ENCODE measurements at regions of chr2 and their contacts with region 1.

Region 1: DNA sequence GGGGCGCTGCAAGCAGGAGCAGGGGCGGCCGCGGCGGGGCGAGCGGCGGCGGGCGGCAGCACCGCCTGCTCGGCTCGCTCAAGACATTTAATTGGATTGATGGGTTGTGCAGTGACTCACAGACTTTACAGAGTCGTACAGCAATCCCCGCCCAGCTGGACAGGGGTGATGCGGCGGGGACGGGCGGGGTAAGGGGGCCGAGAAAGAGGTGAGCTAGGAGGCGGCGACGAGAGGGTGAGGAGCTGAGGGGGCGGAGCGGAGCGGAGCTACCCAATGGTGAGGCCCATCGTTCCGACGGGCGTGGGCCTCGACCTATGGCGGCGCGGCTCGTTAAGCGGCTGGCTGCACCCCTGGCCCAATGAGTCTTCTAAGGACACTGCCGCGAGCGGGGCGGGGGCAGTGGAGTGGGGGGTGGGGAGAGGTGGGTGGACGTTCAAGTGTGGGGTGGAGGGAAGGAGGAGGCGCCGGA is 97.1 kb upstream of the SERTAD2 start:
- DNase-seq: peak; percentile 99
- H3K4me3 ChIP-seq: peak overlapping the region; percentile 73 to 74
- H3K27ac ChIP-seq: peak overlapping the region; percentile 96 to 98
- H3K4me1 ChIP-seq: peaks cover 6% of the 10 kb centered on the region
- H3K27me3 ChIP-seq: no peaks in the 10 kb centered on the region
- CTCF ChIP-seq: peak in 2 of 4 experiments; percentile 35 to 44
- POLR2A ChIP-seq: peak; percentile 99

Region 2: GRCh38 chr2:64644177-64645004 is 106.5 kb before region 1 on chr2:
- intact Hi-C with region 1: loop called (anchors 2 kb)
- DNase-seq: peak; percentile 53
- H3K4me3 ChIP-seq: peak overlapping the region; percentile 25 to 33
- H3K27ac ChIP-seq: peak overlapping the region; percentile 90
- H3K4me1 ChIP-seq: peaks cover 13% of the 10 kb centered on the region
- H3K27me3 ChIP-seq: no peaks in the 10 kb centered on the region
- CTCF ChIP-seq: no peak
- POLR2A ChIP-seq: peak; percentile 44

Region 3: GRCh38 chr2:64653349-64654062 is 97.3 kb before region 1 on chr2 and contains the start of gene SERTAD2:
- intact Hi-C with region 1: loop called (anchors 1 kb)
- DNase-seq: peak; percentile 87
- H3K4me3 ChIP-seq: peak within 1 kb of the TSS; percentile 94 to 96
- H3K27ac ChIP-seq: peak within 1 kb of the TSS; percentile 99
- H3K4me1 ChIP-seq: no peaks in the 10 kb centered on the region
- H3K27me3 ChIP-seq: no peaks in the 10 kb centered on the region
- CTCF ChIP-seq: peak in 1 of 4 experiments; percentile 2
- POLR2A ChIP-seq: peak; percentile 86
- total RNA-seq, gene SERTAD2: 15.3 to 26.0 TPM

Region 4: GRCh38 chr2:64730551-64731262 is 20.1 kb before region 1 on chr2:
- intact Hi-C with region 1: loop called (anchors 2 kb)
- DNase-seq: peak; percentile 71
- H3K4me3 ChIP-seq: peak overlapping the region; percentile 11 to 30
- H3K27ac ChIP-seq: peak overlapping the region; percentile 45 to 60
- H3K4me1 ChIP-seq: no peaks in the 10 kb centered on the region
- H3K27me3 ChIP-seq: no peaks in the 10 kb centered on the region
- CTCF ChIP-seq: no peak
- POLR2A ChIP-seq: no peak

Region 5: DNA sequence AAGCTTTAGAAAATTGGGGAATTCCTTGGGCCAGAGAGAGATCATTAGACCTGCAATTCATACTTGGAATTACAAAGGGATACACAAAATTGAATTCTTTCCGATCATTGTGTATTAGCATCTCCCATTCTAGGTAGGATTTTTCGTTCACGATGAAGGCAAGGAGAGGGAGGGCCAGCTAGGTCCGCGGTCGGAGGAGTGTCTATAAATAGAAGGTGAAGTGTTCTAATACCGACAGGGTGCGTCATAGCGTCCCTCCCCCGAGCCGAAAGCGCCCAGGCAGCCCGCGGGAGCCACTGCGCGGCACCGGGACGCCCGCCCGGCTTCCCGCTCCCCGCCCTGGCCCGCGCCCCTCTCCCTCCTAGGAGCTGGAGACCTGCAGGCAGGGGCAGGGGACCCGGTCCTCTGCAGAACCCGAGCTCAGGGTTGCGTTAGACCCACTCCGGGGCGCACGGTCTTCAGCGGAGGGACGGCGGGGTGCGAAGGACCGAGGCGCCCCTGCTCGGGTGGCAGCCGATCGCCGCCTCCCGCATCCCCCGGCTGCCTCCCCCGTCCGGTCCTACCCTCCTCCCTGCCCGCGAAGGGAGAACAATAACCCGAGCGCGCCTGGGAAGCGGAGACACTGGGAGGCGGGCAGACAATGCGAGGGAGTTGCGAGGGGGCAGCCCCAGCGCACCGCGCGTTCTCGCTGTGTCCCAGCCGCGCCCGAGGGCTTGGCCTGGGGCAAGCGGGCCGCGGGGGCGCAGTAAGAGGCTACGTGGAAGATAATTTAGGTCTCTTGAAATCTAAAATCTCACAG is 17.0 kb after region 1 on chr2:
- intact Hi-C with region 1: loop called (anchors 2 kb)
- DNase-seq: peak; percentile 92
- H3K4me3 ChIP-seq: peak overlapping the region; percentile 75 to 77
- H3K27ac ChIP-seq: peak overlapping the region; percentile 93 to 96
- H3K4me1 ChIP-seq: no peaks in the 10 kb centered on the region
- H3K27me3 ChIP-seq: no peaks in the 10 kb centered on the region
- CTCF ChIP-seq: peak in 1 of 4 experiments; percentile 26
- POLR2A ChIP-seq: peak; percentile 80

Region 6: DNA sequence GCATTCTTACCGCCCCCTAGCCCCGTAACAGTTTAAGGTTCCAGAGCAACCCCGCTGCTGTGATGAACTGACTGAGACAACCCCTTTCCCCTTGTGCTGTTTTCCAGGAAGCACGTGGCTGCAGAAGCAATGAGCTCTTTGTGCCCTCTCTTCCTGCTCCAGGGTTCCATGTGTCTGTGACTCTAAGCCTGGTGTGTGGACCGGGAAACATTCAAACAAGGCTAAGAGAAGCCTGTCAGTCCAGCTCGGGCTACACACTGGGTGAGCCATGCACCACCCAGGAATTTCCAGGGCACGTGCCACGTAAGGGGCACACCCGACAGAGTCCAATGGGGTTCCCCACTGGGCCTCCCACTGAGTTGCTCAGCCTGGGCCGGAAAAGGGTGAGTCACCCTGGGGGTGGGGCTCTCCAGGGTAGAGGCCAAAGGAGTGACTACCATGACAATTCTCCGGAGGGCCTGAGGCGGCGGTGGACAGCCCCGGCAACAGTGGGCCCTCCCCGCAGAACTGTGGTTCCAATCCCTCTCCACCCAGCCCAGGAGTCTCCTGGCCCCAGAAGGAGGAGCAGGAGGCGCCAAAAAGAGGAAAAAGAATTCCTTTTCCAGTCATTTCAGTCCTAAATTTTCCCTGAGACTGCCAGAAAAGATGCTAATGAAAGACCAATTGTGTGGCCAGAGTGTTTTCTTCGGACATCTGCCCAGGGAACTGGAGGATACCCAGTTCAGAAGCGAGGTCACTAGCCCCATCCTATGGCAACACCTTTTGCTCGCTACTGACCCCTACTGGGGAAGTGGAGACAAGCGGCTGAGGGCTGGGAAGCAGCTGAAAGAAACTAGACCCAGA is 80.5 kb after region 1 on chr2:
- intact Hi-C with region 1: loop called (anchors 5 kb)
- DNase-seq: peak; percentile 36
- H3K4me3 ChIP-seq: no peak overlapping the region
- H3K27ac ChIP-seq: no peak overlapping the region
- H3K4me1 ChIP-seq: no peaks in the 10 kb centered on the region
- H3K27me3 ChIP-seq: no peaks in the 10 kb centered on the region
- CTCF ChIP-seq: peak in 3 of 4 experiments; percentile 48 to 61 (median 54)
- POLR2A ChIP-seq: no peak

Region 7: GRCh38 chr2:64859312-64860212 is 108.7 kb after region 1 on chr2:
- intact Hi-C with region 1: loop called (anchors 2 kb)
- DNase-seq: peak; percentile 87
- H3K4me3 ChIP-seq: peak overlapping the region; percentile 30 to 40
- H3K27ac ChIP-seq: peak overlapping the region; percentile 75 to 84
- H3K4me1 ChIP-seq: peaks cover 8% of the 10 kb centered on the region
- H3K27me3 ChIP-seq: no peaks in the 10 kb centered on the region
- CTCF ChIP-seq: no peak
- POLR2A ChIP-seq: no peak

Region 8: GRCh38 chr2:65164426-65164891 is 413.6 kb after region 1 on chr2:
- intact Hi-C with region 1: no loop called
- DNase-seq: no peak
- H3K4me3 ChIP-seq: no peak overlapping the region
- H3K27ac ChIP-seq: no peak overlapping the region
- H3K4me1 ChIP-seq: no peaks in the 10 kb centered on the region
- H3K27me3 ChIP-seq: no peaks in the 10 kb centered on the region
- CTCF ChIP-seq: no peak
- POLR2A ChIP-seq: no peak

Region 9: GRCh38 chr2:65320042-65320725 is 569.3 kb after region 1 on chr2:
- intact Hi-C with region 1: no loop called
- DNase-seq: no peak
- H3K4me3 ChIP-seq: no peak overlapping the region
- H3K27ac ChIP-seq: no peak overlapping the region
- H3K4me1 ChIP-seq: peaks cover 9% of the 10 kb centered on the region
- H3K27me3 ChIP-seq: no peaks in the 10 kb centered on the region
- CTCF ChIP-seq: no peak
- POLR2A ChIP-seq: no peak